ENCODE measurements at regions of chr3 and their contacts with region 1.

Region 1: DNA sequence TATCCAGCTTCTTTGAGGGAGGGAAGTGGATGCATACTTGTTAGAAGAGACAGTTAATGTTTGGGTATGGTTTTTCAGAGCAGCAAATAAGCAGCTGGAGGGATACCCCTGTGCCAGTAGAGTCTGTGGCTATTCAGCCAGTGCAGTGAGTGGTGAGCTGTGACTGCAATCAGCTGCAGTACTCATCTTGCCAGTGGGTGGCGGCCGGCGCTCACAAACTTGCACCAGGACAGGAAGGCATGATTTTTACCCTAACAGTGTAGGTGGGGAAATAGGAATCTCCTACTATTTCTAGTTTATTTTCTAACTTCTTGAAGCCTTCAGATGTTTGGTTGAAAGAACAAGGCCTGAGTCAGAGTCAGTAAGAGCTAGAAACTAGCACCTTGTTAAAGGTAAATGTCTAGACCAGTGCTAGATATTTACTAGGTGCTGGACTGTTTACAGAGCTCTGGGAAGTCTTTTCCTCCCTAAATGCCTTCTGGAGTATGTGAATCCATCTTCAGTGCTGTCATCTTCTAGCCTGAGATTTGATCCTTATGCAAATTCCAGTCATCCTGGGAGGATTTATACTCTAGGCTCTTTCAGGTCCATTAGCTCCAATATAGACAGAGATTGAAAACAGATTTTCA is 23.6 kb downstream of the TIMP4 start:
- DNase-seq: peak; percentile 54 to 72
- H3K4me3 ChIP-seq: no peak overlapping the region
- H3K27ac ChIP-seq: no peak overlapping the region
- H3K4me1 ChIP-seq: peaks cover 14% of the 10 kb centered on the region
- H3K27me3 ChIP-seq: no peaks in the 10 kb centered on the region
- CTCF ChIP-seq: peak; percentile 96

Region 2: DNA sequence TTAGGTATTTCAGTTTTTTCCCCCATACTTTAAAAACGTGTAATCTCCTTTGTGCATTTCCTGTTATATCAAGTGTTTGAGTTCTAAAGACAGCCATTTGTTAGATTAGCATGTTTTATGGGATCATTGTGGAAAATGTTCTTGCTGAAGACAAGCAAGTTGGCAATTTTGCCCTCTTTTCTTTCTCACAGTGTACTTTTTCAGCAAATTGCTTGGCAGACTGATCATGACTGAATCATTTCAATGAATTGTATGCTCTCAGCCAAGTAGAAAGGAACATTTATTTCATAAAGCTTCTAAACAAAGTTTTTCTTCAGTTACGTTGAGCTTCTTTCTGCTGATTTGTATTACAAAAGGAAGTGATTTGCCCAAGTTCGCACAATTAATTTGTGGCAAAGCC is 811.3 kb before region 1 on chr3:
- CTCF ChIA-PET with region 1: no interaction called
- POLR2A ChIA-PET with region 1: no interaction called
- intact Hi-C with region 1: no loop called
- DNase-seq: no peak
- H3K4me3 ChIP-seq: no peak overlapping the region
- H3K27ac ChIP-seq: no peak overlapping the region
- H3K4me1 ChIP-seq: no peaks in the 10 kb centered on the region
- H3K27me3 ChIP-seq: no peaks in the 10 kb centered on the region
- CTCF ChIP-seq: no peak

Region 3: GRCh38 chr3:11379233-11379823 is 755.8 kb before region 1 on chr3:
- CTCF ChIA-PET with region 1: no interaction called
- POLR2A ChIA-PET with region 1: no interaction called
- intact Hi-C with region 1: loop called (anchors 5 kb)
- DNase-seq: peak in 1 of 2 experiments; percentile 13
- H3K4me3 ChIP-seq: no peak overlapping the region
- H3K27ac ChIP-seq: no peak overlapping the region
- H3K4me1 ChIP-seq: peaks cover 7% of the 10 kb centered on the region
- H3K27me3 ChIP-seq: no peaks in the 10 kb centered on the region
- CTCF ChIP-seq: peak; percentile 82

Region 4: DNA sequence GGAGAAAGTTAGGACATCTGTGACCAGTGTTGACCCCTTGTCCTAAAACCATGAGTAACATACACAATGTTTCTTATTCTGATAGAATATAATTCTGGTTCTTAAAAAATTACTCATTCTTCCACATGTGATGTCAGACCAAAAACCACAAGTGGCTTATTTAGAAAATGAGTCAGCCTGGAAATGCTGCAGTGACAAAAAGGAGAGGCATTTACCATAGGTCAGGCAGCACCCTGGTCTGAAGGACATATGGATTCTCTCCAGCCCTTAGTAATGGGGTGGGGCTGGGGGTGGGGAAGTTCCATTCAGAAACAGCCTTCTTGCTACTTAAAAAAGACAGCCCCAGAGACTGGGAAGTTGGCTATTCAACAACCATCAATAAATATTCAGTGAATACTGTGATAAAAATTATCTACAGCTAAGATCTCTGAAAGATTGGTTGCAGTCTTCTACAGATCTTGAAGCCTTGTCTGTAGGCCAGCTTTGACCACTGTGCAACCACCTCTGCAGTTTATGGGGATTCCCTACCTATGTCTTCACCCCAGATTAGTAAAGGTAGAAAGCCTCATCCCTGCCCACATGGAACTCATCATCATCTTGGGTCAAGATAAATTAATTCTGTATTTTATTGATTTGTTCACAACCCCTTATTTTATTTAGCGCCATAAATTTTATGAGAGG is 58.5 kb after region 1 on chr3:
- CTCF ChIA-PET with region 1: interaction called, 4 read pairs
- POLR2A ChIA-PET with region 1: no interaction called
- intact Hi-C with region 1: loop called (anchors 5 kb)
- DNase-seq: peak; percentile 69 to 96
- H3K4me3 ChIP-seq: peak overlapping the region; percentile 27; the same call in 1 of the 2 replicates
- H3K27ac ChIP-seq: peak overlapping the region; percentile 97
- H3K4me1 ChIP-seq: peaks cover 72% of the 10 kb centered on the region
- H3K27me3 ChIP-seq: no peaks in the 10 kb centered on the region
- CTCF ChIP-seq: no peak

Region 5: GRCh38 chr3:12405432-12406272 is 270.5 kb after region 1 on chr3:
- CTCF ChIA-PET with region 1: no interaction called
- POLR2A ChIA-PET with region 1: no interaction called
- intact Hi-C with region 1: loop called (anchors 5 kb)
- DNase-seq: peak; percentile 92 to 97
- H3K4me3 ChIP-seq: peak overlapping the region; percentile 20; the same call in 1 of the 2 replicates
- H3K27ac ChIP-seq: peak overlapping the region; percentile 96
- H3K4me1 ChIP-seq: peaks cover 51% of the 10 kb centered on the region
- H3K27me3 ChIP-seq: no peaks in the 10 kb centered on the region
- CTCF ChIP-seq: no peak

Region 6: GRCh38 chr3:12508291-12508700 is 373.2 kb after region 1 on chr3:
- CTCF ChIA-PET with region 1: no interaction called
- POLR2A ChIA-PET with region 1: no interaction called
- intact Hi-C with region 1: loop called (anchors 1 kb)
- DNase-seq: peak in 1 of 2 experiments; percentile 40
- H3K4me3 ChIP-seq: no peak overlapping the region
- H3K27ac ChIP-seq: no peak overlapping the region
- H3K4me1 ChIP-seq: peaks cover 12% of the 10 kb centered on the region; the same call in 1 of the 2 replicates
- H3K27me3 ChIP-seq: no peaks in the 10 kb centered on the region
- CTCF ChIP-seq: no peak

Region 7: DNA sequence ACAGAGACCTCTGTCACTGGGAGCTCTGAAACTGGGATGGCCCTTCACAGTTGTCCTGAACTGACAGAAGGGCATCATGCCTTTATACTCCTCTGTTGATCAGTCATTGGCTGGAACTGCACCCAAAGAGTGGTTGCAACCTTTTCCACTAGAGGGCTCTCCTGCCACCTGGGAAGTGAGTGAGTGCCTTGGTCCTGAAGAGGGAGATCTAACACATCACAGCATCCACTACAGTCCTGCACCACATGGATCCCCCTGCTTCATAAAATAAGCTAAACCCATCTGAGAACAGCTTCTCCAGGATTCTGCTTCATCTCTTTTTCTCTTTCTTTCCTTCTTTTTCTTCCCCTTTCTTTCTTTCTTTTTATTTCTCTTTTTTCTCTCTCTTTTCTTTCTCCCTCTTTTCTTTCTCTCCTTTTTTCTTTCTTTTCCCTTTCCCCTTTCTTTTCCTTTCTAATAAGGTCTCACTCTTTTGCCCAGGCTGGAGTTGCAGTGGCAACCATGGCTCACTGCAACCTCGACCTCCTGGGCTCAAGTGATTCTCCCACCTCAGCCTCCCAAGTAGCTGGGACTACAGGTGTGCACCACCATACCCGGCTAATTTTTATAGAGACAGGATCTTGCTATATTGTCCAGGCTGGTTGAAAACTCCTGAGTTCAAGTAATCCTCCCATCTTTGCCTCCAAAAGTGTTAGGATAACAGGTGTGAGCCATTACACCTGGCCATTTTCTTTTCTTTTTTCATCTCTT is 571.5 kb after region 1 on chr3:
- CTCF ChIA-PET with region 1: no interaction called
- POLR2A ChIA-PET with region 1: no interaction called
- intact Hi-C with region 1: loop called (anchors 10 kb)
- DNase-seq: peak; percentile 63 to 71
- H3K4me3 ChIP-seq: no peak overlapping the region
- H3K27ac ChIP-seq: no peak overlapping the region
- H3K4me1 ChIP-seq: peaks cover 17% of the 10 kb centered on the region
- H3K27me3 ChIP-seq: no peaks in the 10 kb centered on the region
- CTCF ChIP-seq: peak; percentile 85

Region 8: GRCh38 chr3:12891985-12892839 is 757.1 kb after region 1 on chr3:
- CTCF ChIA-PET with region 1: interaction called, 4 read pairs
- POLR2A ChIA-PET with region 1: no interaction called
- intact Hi-C with region 1: loop called (anchors 1 kb)
- DNase-seq: peak in 1 of 2 experiments; percentile 47
- H3K4me3 ChIP-seq: no peak overlapping the region
- H3K27ac ChIP-seq: no peak overlapping the region
- H3K4me1 ChIP-seq: no peaks in the 10 kb centered on the region
- H3K27me3 ChIP-seq: peaks cover 34% of the 10 kb centered on the region; the same call in 1 of the 2 replicates
- CTCF ChIP-seq: peak; percentile 96